A549 (cell line): ENCODE measurements at regions of chr22 and their contacts with region 1.

Region 1: GRCh38 chr22:22342697-22343580 is 98.4 kb downstream of the VPREB1 start:
- DNase-seq: peak; percentile 43 to 49
- ATAC-seq: peak; percentile 77 to 88; a peak in 5 of 6 replicates
- H3K4me3 ChIP-seq: no peak overlapping the region
- H3K27ac ChIP-seq: no peak overlapping the region
- H3K4me1 ChIP-seq: no peaks in the 10 kb centered on the region
- CTCF ChIP-seq: peak; percentile 54
- EP300 ChIP-seq: no peak
- POLR2A ChIP-seq: no peak
- RAD21 ChIP-seq: peak; percentile 18 to 39; a peak in 2 of 5 replicates

Region 2: DNA sequence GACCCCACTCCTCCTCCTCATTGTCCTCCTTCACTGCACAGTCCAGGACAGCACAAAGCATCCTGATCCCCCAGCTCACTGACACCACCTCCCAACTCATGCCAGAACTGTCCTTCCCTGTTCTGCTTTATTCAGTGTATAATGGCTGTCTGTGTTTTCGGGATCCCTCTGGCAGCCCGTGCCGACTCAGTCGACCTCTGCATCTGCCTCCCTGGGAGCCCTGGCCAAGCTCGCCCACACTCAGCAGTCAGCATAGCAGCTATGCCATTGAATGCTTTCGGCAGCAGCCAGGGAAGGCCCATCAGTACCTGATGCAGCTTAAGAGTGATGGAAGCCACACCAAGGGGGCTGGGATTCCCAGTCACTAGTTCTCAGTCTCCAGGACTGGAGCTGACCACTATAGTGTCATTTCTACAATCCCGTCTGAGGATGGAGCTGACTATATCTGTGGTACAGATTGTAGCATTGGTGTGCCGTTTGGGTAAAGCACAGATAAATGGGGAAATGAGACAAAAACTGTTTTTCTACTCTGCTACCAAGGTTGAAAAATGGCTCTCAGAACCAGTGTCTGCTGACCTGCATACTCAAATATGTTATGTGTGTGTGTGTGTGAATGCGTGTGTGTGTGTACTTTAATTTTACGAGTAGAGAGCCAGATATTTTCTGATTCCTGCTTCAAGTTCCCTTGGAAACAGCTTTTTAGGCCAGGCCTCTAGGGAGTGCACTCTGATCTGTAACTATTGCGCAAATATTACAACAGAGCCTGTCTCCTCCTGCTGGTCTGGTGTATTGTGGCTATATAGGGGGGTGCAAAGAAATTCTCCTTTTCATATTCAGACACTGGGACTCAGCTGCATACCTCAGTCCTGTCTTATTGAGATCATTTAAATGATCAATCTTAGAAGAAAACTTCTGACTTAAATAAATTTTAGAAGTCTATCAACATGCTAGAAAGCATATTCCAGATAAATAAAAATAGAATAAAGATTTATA is 281.6 kb before region 1 on chr22:
- CTCF ChIA-PET with region 1: no interaction called
- POLR2A ChIA-PET with region 1: no interaction called
- DNase-seq: peak; percentile 6 to 56
- ATAC-seq: peak; percentile 89 to 93
- H3K4me3 ChIP-seq: no peak overlapping the region
- H3K27ac ChIP-seq: peak overlapping the region in 1 of 2 experiments; percentile 50; a peak in 3 of 6 replicates
- H3K4me1 ChIP-seq: peaks cover 16% of the 10 kb centered on the region; the same call in 1 of the 3 replicates
- CTCF ChIP-seq: 0 out of 3 replicates have a peak, but pooled peaks have one; percentile 5
- EP300 ChIP-seq: no peak
- POLR2A ChIP-seq: no peak
- RAD21 ChIP-seq: no peak

Region 3: GRCh38 chr22:22201185-22201929 is 141.6 kb before region 1 on chr22:
- CTCF ChIA-PET with region 1: interaction called, 10 read pairs
- POLR2A ChIA-PET with region 1: no interaction called
- DNase-seq: peak; percentile 30 to 48
- ATAC-seq: peak; percentile 72 to 85; a peak in 4 of 6 replicates
- H3K4me3 ChIP-seq: no peak overlapping the region
- H3K27ac ChIP-seq: no peak overlapping the region
- H3K4me1 ChIP-seq: no peaks in the 10 kb centered on the region
- CTCF ChIP-seq: peak; percentile 52
- EP300 ChIP-seq: no peak
- POLR2A ChIP-seq: no peak
- RAD21 ChIP-seq: 0 out of 5 replicates have a peak, but pooled peaks of 1 of the 2 experiments have one; percentile 8

Region 4: DNA sequence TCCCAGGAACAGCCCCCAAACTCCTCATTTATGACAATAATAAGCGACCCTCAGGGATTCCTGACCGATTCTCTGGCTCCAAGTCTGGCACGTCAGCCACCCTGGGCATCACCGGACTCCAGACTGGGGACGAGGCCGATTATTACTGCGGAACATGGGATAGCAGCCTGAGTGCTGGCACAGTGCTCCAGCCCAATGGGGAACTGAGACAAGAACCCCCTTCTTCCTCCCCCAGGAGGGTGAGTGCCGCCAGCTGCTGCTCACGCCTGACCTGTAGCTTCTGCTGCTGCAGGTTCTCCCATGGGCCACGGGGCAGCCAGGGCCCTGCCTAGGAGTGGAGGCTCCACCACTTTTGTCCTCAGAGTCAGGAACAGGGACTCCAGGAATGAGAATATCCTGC is 20.1 kb before region 1 on chr22:
- CTCF ChIA-PET with region 1: interaction called, 11 read pairs
- POLR2A ChIA-PET with region 1: no interaction called
- DNase-seq: no peak
- ATAC-seq: no peak
- H3K4me3 ChIP-seq: no peak overlapping the region
- H3K27ac ChIP-seq: no peak overlapping the region
- H3K4me1 ChIP-seq: no peaks in the 10 kb centered on the region
- CTCF ChIP-seq: no peak
- EP300 ChIP-seq: no peak
- POLR2A ChIP-seq: no peak
- RAD21 ChIP-seq: no peak

Region 5: GRCh38 chr22:22357024-22357883 is 14.3 kb after region 1 on chr22:
- CTCF ChIA-PET with region 1: interaction called, 10 read pairs
- POLR2A ChIA-PET with region 1: no interaction called
- DNase-seq: peak; percentile 68 to 78
- ATAC-seq: peak; percentile 96 to 99
- H3K4me3 ChIP-seq: no peak overlapping the region
- H3K27ac ChIP-seq: no peak overlapping the region
- H3K4me1 ChIP-seq: no peaks in the 10 kb centered on the region
- CTCF ChIP-seq: peak; percentile 51
- EP300 ChIP-seq: no peak
- POLR2A ChIP-seq: no peak
- RAD21 ChIP-seq: peak; percentile 45 to 62; a peak in 4 of 5 replicates